ENCODE measurements at regions of chr17 and their contacts with region 1.

Region 1: GRCh38 chr17:61180368-61180767 is 219.3 kb upstream of the TBX2 start:
- DNase-seq: no peak
- ATAC-seq: no peak
- H3K4me3 ChIP-seq: no peak overlapping the region
- H3K4me3 Mint-ChIP-seq: no peak overlapping the region
- H3K27ac ChIP-seq: no peak overlapping the region
- H3K27ac Mint-ChIP-seq: no peak overlapping the region
- H3K4me1 ChIP-seq: no peaks in the 10 kb centered on the region
- H3K4me1 Mint-ChIP-seq: no peaks in the 10 kb centered on the region
- H3K27me3 ChIP-seq: no peaks in the 10 kb centered on the region
- H3K27me3 Mint-ChIP-seq: no peaks in the 10 kb centered on the region
- CTCF ChIP-seq: no peak

Region 2: DNA sequence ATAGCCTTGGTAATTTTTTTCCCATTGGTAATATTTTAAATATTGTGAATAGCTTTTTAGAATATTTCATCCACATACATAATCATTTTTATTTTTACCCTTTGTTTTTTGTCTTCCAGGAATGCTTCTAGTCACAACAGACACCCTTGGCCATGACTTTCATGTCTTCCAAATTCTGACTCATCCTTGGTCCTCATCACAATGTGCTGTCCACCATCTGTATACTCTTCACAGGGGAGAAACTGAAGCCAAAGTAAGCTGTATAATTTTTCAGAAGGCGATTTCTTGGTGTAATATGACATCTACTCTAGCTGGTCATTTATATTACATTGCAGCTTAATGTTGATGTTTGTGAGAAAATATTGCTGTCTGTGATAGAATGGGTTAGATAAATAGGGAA is 233.3 kb before region 1 on chr17:
- CTCF ChIA-PET with region 1: no interaction called
- POLR2A ChIA-PET with region 1: no interaction called
- intact Hi-C with region 1: no loop called
- DNase-seq: no peak
- ATAC-seq: no peak
- H3K4me3 ChIP-seq: no peak overlapping the region
- H3K4me3 Mint-ChIP-seq: no peak overlapping the region
- H3K27ac ChIP-seq: no peak overlapping the region
- H3K27ac Mint-ChIP-seq: no peak overlapping the region
- H3K4me1 ChIP-seq: no peaks in the 10 kb centered on the region
- H3K4me1 Mint-ChIP-seq: no peaks in the 10 kb centered on the region
- H3K27me3 ChIP-seq: no peaks in the 10 kb centered on the region
- H3K27me3 Mint-ChIP-seq: no peaks in the 10 kb centered on the region
- CTCF ChIP-seq: no peak

Region 3: GRCh38 chr17:61097781-61098180 is 82.6 kb before region 1 on chr17:
- CTCF ChIA-PET with region 1: no interaction called
- POLR2A ChIA-PET with region 1: no interaction called
- intact Hi-C with region 1: loop called in 1 of 2 experiments (anchors 10 kb)
- DNase-seq: no peak
- ATAC-seq: no peak
- H3K4me3 ChIP-seq: no peak overlapping the region
- H3K4me3 Mint-ChIP-seq: no peak overlapping the region
- H3K27ac ChIP-seq: no peak overlapping the region
- H3K27ac Mint-ChIP-seq: no peak overlapping the region
- H3K4me1 ChIP-seq: no peaks in the 10 kb centered on the region
- H3K4me1 Mint-ChIP-seq: no peaks in the 10 kb centered on the region
- H3K27me3 ChIP-seq: no peaks in the 10 kb centered on the region
- H3K27me3 Mint-ChIP-seq: no peaks in the 10 kb centered on the region
- CTCF ChIP-seq: no peak